ENCODE measurements at regions of chr7 and their contacts with region 1.

Region 1: GRCh38 chr7:44797329-44798251 is 1.1 kb downstream of the PPIA start:
- DNase-seq: peak; percentile 95
- H3K4me3 Mint-ChIP-seq: peak overlapping the region; percentile 83
- H3K27ac Mint-ChIP-seq: peak overlapping the region; percentile 97
- H3K4me1 Mint-ChIP-seq: peaks cover 25% of the 10 kb centered on the region
- H3K27me3 Mint-ChIP-seq: no peaks in the 10 kb centered on the region
- CTCF ChIP-seq: peak; percentile 70

Region 2: GRCh38 chr7:44712012-44712411 is 85.6 kb before region 1 on chr7:
- CTCF ChIA-PET with region 1: no interaction called
- intact Hi-C with region 1: loop called (anchors 5 kb)
- DNase-seq: peak; percentile 64
- H3K4me3 Mint-ChIP-seq: peak overlapping the region; percentile 0
- H3K27ac Mint-ChIP-seq: peak overlapping the region; percentile 40
- H3K4me1 Mint-ChIP-seq: peaks cover 33% of the 10 kb centered on the region
- H3K27me3 Mint-ChIP-seq: no peaks in the 10 kb centered on the region
- CTCF ChIP-seq: no peak

Region 3: GRCh38 chr7:44824894-44825526 is 27.4 kb after region 1 on chr7:
- CTCF ChIA-PET with region 1: no interaction called
- intact Hi-C with region 1: no loop called
- DNase-seq: no peak
- H3K4me3 Mint-ChIP-seq: no peak overlapping the region
- H3K27ac Mint-ChIP-seq: no peak overlapping the region
- H3K4me1 Mint-ChIP-seq: no peaks in the 10 kb centered on the region
- H3K27me3 Mint-ChIP-seq: no peaks in the 10 kb centered on the region
- CTCF ChIP-seq: no peak

Region 4: GRCh38 chr7:44838751-44839150 is 41.2 kb after region 1 on chr7:
- CTCF ChIA-PET with region 1: no interaction called
- intact Hi-C with region 1: loop called (anchors 5 kb)
- DNase-seq: no peak
- H3K4me3 Mint-ChIP-seq: no peak overlapping the region
- H3K27ac Mint-ChIP-seq: no peak overlapping the region
- H3K4me1 Mint-ChIP-seq: peaks cover 24% of the 10 kb centered on the region
- H3K27me3 Mint-ChIP-seq: no peaks in the 10 kb centered on the region
- CTCF ChIP-seq: no peak

Region 5: DNA sequence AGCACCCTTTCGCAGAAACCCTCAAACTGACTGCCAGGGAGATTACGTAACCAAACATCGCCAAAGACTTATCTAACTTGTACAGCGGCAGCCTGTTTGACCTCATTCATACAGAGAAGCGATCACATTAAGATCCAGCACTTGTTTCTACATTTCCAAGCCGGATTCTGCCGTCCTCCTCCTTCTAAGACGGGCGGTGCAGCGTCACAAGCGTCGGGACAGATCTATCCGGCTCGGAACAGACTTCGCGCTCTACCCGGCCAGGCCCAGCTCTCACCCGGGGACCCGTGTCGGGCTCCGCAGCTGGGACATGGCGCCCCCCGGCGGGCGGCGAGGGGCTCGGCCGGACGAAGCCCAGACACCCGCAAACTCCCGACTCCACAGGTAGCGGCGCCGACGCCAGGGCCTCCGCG is 49.9 kb after region 1 on chr7:
- CTCF ChIA-PET with region 1: interaction called, 8 read pairs
- intact Hi-C with region 1: loop called (anchors 2 kb)
- DNase-seq: peak; percentile 96
- H3K4me3 Mint-ChIP-seq: peak overlapping the region; percentile 82
- H3K27ac Mint-ChIP-seq: peak overlapping the region; percentile 98
- H3K4me1 Mint-ChIP-seq: peaks cover 30% of the 10 kb centered on the region
- H3K27me3 Mint-ChIP-seq: no peaks in the 10 kb centered on the region
- CTCF ChIP-seq: peak; percentile 97

Measured in Calu3 (cell line).